CD14-positive monocyte (primary cell): ENCODE measurements at regions of chr19 and their contacts with region 1.

Region 1: DNA sequence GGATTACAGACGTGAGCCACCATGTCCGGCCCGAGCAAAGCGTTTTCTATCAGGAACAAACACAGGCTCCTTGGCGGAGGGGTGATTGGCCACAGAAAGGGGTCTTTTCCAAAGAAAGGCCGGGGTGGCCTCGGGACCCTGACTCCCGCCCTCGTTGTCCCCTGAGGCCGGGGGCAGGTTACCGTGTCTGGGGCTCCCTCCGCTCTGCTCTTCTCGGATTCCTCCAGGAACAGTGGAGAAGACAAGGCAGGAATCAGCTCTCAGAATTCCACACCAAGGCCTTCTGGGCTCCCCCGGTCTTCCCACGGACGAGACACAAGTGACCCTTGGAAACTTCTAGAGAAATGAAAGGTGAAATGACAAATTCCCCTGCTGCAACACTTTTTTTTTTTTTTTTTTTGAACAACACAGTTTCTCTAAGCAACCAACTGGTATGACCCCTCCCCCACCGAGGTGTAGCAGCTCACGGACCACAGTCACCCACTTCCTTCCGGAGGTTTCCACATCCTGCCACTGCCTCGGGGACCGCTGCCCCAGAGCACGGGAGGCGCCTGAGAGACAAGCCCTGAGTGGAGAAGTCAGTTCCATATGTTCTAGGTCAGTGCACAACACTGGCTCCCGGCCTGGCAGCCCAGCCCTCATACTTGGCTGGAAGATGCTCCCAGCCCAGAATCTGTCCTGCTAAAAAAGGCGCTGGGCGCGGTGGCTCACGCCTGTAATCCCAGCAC is 11.0 kb downstream of the MOB3A start:
- DNase-seq: peak; percentile 98 to 99 (median 98)
- H3K4me3 ChIP-seq: peak overlapping the region; percentile 65 to 99 (median 84)
- H3K4me3 Mint-ChIP-seq: peak overlapping the region; percentile 96 to 97
- H3K27ac ChIP-seq: peak overlapping the region; percentile 96 to 98
- H3K27ac Mint-ChIP-seq: peak overlapping the region; percentile 98 to 100 (median 100)
- H3K4me1 ChIP-seq: peaks cover 82 to 91% of the 10 kb centered on the region in 2 donors
- H3K4me1 Mint-ChIP-seq: peaks cover 76% of the 10 kb centered on the region
- H3K27me3 ChIP-seq: no peaks in the 10 kb centered on the region
- H3K27me3 Mint-ChIP-seq: peaks cover 0 to 5% (median 0%) of the 10 kb centered on the region in 3 donors
- CTCF ChIP-seq: no peak

Region 2: GRCh38 chr19:1905071-1905862 is 179.9 kb before region 1 on chr19 and contains the starts of genes ADAT3 and SCAMP4:
- intact Hi-C with region 1: loop called in 1 of 2 experiments (anchors 5 kb)
- DNase-seq: peak; percentile 96 to 97 (median 96)
- H3K4me3 ChIP-seq: peak within 1 kb of the TSS; percentile 45 to 76 (median 73)
- H3K4me3 Mint-ChIP-seq: peak within 1 kb of the TSS; percentile 87 to 94
- H3K27ac ChIP-seq: peak within 1 kb of the TSS; percentile 79 to 99
- H3K27ac Mint-ChIP-seq: peak within 1 kb of the TSS; percentile 92 to 100 (median 95)
- H3K4me1 ChIP-seq: peaks cover 52 to 72% of the 10 kb centered on the region in 2 donors
- H3K4me1 Mint-ChIP-seq: peaks cover 58% of the 10 kb centered on the region
- H3K27me3 ChIP-seq: no peaks in the 10 kb centered on the region
- H3K27me3 Mint-ChIP-seq: peaks cover 0 to 2% (median 0%) of the 10 kb centered on the region in 3 donors
- CTCF ChIP-seq: no peak
- polyA plus RNA-seq, gene ADAT3: 2.7 to 3.2 (median 3.1) TPM
- polyA plus RNA-seq, gene SCAMP4: 11.9 to 39.4 (median 15.4) TPM

Region 3: GRCh38 chr19:2070436-2070827 is 14.7 kb before region 1 on chr19:
- intact Hi-C with region 1: loop called (anchors 1 to 2 kb)
- DNase-seq: no peak
- H3K4me3 ChIP-seq: no peak overlapping the region
- H3K4me3 Mint-ChIP-seq: no peak overlapping the region
- H3K27ac ChIP-seq: peak overlapping the region in 1 of 2 donors; percentile 8
- H3K27ac Mint-ChIP-seq: peak overlapping the region in 5 of 7 donors; percentile 3 to 68 (median 58)
- H3K4me1 ChIP-seq: peaks cover 39 to 42% of the 10 kb centered on the region in 2 donors
- H3K4me1 Mint-ChIP-seq: peaks cover 47% of the 10 kb centered on the region
- H3K27me3 ChIP-seq: no peaks in the 10 kb centered on the region
- H3K27me3 Mint-ChIP-seq: peaks cover 0 to 2% (median 1%) of the 10 kb centered on the region in 3 donors
- CTCF ChIP-seq: no peak

Region 4: GRCh38 chr19:2168619-2169424 is 83.7 kb after region 1 on chr19:
- intact Hi-C with region 1: loop called in 1 of 2 experiments (anchors 5 kb)
- DNase-seq: peak; percentile 99 to 100 (median 99)
- H3K4me3 ChIP-seq: peak overlapping the region; percentile 4 to 70 (median 31)
- H3K4me3 Mint-ChIP-seq: peak overlapping the region; percentile 75 to 83
- H3K27ac ChIP-seq: peak overlapping the region; percentile 99
- H3K27ac Mint-ChIP-seq: peak overlapping the region; percentile 99 to 100 (median 100)
- H3K4me1 ChIP-seq: peaks cover 45 to 51% of the 10 kb centered on the region in 2 donors
- H3K4me1 Mint-ChIP-seq: peaks cover 61% of the 10 kb centered on the region
- H3K27me3 ChIP-seq: no peaks in the 10 kb centered on the region
- H3K27me3 Mint-ChIP-seq: peaks cover 0 to 3% (median 0%) of the 10 kb centered on the region in 3 donors
- CTCF ChIP-seq: no peak

Region 5: GRCh38 chr19:2213799-2214198 is 128.6 kb after region 1 on chr19:
- intact Hi-C with region 1: no loop called
- DNase-seq: no peak
- H3K4me3 ChIP-seq: no peak overlapping the region
- H3K4me3 Mint-ChIP-seq: no peak overlapping the region
- H3K27ac ChIP-seq: no peak overlapping the region
- H3K27ac Mint-ChIP-seq: peak overlapping the region in 3 of 7 donors; percentile 35 to 61 (median 50)
- H3K4me1 ChIP-seq: no peaks in the 10 kb centered on the region
- H3K4me1 Mint-ChIP-seq: no peaks in the 10 kb centered on the region
- H3K27me3 ChIP-seq: no peaks in the 10 kb centered on the region
- H3K27me3 Mint-ChIP-seq: peaks cover 0 to 2% (median 0%) of the 10 kb centered on the region in 3 donors
- CTCF ChIP-seq: no peak

Region 6: DNA sequence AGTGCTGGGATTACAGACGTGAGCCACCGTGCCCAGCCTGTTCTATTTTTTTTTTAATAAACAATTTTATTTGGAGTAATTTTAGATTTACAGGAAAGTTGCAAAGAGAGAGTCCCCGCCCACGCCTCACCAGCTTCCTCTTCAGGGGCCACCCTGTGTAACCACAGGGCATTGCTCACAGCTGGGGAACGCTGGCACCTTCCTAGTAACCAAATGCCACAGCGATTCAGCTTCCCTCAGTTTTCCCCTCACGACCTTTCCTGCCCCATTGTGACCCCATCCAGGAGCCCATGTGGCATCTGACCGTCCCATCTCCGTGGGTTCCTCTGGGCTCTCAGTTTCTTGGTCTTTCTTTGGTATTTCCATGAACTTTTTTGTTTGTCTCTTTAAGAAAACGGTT is 533.5 kb after region 1 on chr19:
- intact Hi-C with region 1: loop called in 1 of 2 experiments (anchors 5 kb)
- DNase-seq: peak; percentile 89 to 93 (median 91)
- H3K4me3 ChIP-seq: peak overlapping the region in 1 of 3 experiments; percentile 48
- H3K4me3 Mint-ChIP-seq: peak overlapping the region; percentile 35 to 67
- H3K27ac ChIP-seq: peak overlapping the region; percentile 90 to 96
- H3K27ac Mint-ChIP-seq: peak overlapping the region; percentile 95 to 99 (median 98)
- H3K4me1 ChIP-seq: peaks cover 84 to 91% of the 10 kb centered on the region in 2 donors
- H3K4me1 Mint-ChIP-seq: peaks cover 83% of the 10 kb centered on the region
- H3K27me3 ChIP-seq: no peaks in the 10 kb centered on the region
- H3K27me3 Mint-ChIP-seq: peaks cover 0 to 4% (median 2%) of the 10 kb centered on the region in 3 donors
- CTCF ChIP-seq: no peak